Heart left ventricle (tissue), 16 donors: ENCODE measurements at regions of chr5 and their contacts with region 1.

Region 1: DNA sequence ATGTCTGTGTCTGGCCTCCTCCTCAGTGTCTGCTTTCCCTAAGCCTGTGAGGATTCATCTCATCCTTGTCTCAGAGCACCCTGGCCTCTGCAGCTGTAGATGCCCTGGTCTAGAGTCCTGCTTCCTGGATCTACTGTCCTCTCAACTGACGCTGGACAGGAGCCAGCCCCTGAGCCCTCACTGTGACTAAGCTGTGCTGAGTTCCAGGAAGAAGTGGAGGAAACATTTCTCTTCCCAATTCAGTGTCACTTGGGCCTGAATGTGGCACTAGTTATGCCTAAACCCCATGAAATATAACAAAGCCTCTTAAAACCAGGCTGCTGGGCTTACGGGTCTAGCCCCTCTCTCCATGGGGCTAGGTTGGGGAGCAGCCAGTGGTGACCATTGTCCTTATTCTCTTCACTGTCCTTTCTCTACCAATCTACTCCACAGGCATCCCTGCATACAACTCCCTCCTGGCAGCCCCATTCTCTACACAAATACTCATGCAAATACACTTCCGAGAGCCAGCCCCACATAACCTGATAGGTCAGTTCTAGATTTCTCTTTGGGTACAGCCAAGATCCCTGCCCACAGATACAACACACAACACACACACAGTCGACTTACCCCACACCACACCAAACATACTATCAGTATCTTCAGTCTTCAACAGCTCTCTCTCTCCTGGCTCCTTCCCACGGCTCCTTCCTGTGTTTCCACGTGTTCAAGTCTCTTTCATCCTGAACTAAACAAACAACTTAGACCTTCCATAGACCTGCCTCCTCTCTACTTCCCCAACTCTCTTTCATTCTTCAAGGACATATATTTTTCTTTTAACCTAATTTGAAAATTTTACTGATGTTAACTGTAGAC is 220.8 kb downstream of the SNX18 start:
- DNase-seq: peak; percentile 71 to 90 (median 83)
- ATAC-seq: peak; percentile 32 to 81 (median 64)
- H3K4me3 ChIP-seq: no peak overlapping the region
- H3K27ac ChIP-seq: peak overlapping the region in 1 of 12 donors; percentile 88
- H3K4me1 ChIP-seq: peaks cover 0 to 31% (median 11%) of the 10 kb centered on the region in 12 donors
- H3K27me3 ChIP-seq: no peaks in the 10 kb centered on the region
- CTCF ChIP-seq: no peak
- POLR2A ChIP-seq: no peak

Region 2: DNA sequence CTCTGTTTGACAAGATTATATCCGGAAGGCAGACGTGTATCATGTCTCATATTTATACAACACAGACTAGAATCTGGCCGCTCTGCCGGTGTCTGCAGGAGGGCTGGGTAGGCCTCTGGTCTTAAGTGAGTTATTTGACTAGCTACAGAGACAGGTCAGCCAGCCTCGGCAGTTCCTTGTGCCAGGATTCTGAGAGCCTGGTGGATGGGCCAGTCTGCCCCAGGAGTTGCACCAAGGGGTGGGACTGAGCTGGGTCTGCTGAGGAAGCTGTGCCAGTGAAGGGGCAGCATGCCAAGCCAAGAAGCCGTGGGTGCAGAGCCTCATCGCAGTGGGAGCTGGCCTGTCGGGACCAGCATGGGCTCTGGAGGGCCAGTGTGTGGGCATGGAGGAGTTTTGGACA is 213.6 kb before region 1 on chr5:
- intact Hi-C with region 1: loop called in 5 of 10 experiments (anchors 5 to 10 kb)
- DNase-seq: peak in 4 of 5 donors; percentile 53 to 74 (median 63)
- ATAC-seq: peak in 3 of 4 donors; percentile 26 to 66 (median 50)
- H3K4me3 ChIP-seq: peak overlapping the region in 7 of 12 donors; percentile 1 to 39 (median 10)
- H3K27ac ChIP-seq: peak overlapping the region in 10 of 12 donors; percentile 16 to 84 (median 72)
- H3K4me1 ChIP-seq: peaks cover 4 to 96% (median 82%) of the 10 kb centered on the region in 12 donors
- H3K27me3 ChIP-seq: no peaks in the 10 kb centered on the region
- CTCF ChIP-seq: no peak
- POLR2A ChIP-seq: no peak